Activated B cell treated with CpG ODN at 0.5 μM for 24 hours (primary cell): ENCODE measurements at regions of chr12 and their contacts with region 1.

Region 1: DNA sequence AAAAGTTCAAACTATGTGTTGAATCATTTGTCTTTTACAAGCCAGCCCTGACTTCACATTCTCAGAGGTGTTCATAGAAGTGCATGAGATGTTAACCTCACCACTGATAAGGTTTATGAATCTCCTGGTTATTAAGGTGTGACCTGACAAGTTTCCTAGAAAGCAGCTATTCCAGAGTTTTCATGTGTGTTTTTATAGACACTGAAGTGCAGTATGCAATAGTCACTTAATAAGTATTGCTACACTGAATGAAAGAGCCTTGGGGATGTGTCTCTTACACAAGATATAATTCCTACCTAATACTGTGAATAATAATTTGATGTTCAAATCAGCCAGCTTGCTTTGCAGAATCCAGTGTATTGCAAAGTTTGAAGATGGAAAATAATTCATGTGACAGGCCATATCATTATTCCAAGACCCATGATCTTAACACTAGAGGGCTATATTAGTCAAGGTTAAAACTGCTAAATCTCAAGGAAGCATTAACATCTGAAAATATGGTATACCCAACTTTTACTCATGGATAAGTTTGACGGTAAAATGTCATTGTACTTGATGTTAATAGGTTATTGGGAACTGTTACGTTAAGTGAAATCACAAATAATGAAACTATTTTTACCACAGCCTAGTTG is 13.0 kb downstream of the SLC25A3 start:
- DNase-seq: no peak
- ATAC-seq: no peak
- H3K4me3 Mint-ChIP-seq: no peak overlapping the region
- H3K27ac Mint-ChIP-seq: no peak overlapping the region
- H3K4me1 Mint-ChIP-seq: peaks cover 7% of the 10 kb centered on the region
- H3K27me3 Mint-ChIP-seq: no peaks in the 10 kb centered on the region
- CTCF ChIP-seq: no peak

Region 2: DNA sequence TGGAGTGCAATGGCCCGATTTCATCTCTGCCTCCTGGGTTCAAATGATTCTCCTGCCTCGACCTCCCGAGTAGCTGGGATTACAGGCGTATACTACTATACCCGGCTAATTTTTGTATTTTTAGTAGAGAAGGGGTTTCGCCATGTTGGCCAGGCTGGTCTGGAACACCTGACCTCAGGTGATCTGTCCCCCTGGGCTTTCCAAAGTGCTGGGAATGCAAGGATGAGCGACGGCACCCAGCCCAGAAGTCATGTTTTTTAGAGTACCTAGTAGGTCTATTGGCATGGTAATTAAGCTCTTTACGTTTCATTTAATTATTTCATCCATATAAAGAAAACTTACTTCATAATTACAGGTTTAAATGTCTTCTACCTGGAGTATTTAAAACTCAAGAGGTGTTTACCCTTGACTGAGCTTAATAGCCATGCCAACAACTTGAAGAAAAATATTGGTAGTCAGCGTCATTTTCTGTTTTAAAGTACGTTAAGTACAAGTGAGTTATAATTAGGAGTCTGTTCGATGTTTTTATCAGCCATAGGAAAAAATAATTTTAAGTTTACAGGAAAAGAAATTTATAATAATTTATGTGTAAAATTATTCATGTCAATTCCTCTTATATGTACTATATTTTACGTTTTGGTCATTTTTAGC is 87.1 kb before region 1 on chr12:
- CTCF ChIA-PET with region 1: no interaction called
- POLR2A ChIA-PET with region 1: no interaction called
- intact Hi-C with region 1: no loop called
- DNase-seq: no peak
- ATAC-seq: no peak
- H3K4me3 Mint-ChIP-seq: peak overlapping the region; percentile 24
- H3K27ac Mint-ChIP-seq: peak overlapping the region; percentile 46
- H3K4me1 Mint-ChIP-seq: peaks cover 64% of the 10 kb centered on the region
- H3K27me3 Mint-ChIP-seq: no peaks in the 10 kb centered on the region
- CTCF ChIP-seq: no peak

Region 3: DNA sequence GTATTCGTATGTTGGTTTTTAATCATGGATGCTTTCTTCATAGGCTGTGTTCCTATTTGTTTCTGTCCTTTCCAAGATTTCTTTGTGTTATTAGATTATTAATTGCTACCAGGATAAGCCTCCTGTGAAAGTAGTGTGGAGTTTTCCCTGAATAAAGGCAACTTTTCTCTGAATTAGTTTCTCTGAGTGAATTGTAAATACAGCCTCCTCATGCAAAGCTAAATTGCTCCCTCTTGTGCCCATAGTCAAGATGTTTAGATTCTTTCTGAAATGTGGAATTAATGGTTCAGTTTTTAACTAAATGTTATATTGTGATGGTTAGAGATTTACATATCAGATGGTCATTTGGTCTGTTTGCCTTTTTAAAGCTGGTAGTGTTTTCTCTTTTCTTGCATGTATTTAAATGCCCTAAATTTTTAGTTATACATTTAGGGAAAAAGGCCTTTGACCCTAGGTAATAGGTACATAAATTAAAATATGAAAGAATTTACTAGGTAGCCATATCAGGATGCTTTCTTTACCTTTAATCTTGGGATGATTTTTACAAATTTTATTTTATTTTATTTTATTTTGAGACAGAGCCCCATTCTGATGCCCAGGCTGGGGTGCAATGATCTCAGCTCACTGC is 47.5 kb after region 1 on chr12:
- CTCF ChIA-PET with region 1: interaction called, 6 read pairs
- POLR2A ChIA-PET with region 1: no interaction called
- intact Hi-C with region 1: loop called (anchors 1 kb)
- DNase-seq: no peak
- ATAC-seq: peak; percentile 56
- H3K4me3 Mint-ChIP-seq: no peak overlapping the region
- H3K27ac Mint-ChIP-seq: no peak overlapping the region
- H3K4me1 Mint-ChIP-seq: no peaks in the 10 kb centered on the region
- H3K27me3 Mint-ChIP-seq: no peaks in the 10 kb centered on the region
- CTCF ChIP-seq: peak; percentile 21